ENCODE measurements at regions of chr18 and their contacts with region 1.

Region 1: GRCh38 chr18:28469946-28470345 is 293.0 kb upstream of the CDH2 start:
- DNase-seq: no peak
- H3K4me3 ChIP-seq: no peak overlapping the region
- H3K27ac ChIP-seq: no peak overlapping the region
- H3K4me1 ChIP-seq: no peaks in the 10 kb centered on the region
- H3K27me3 ChIP-seq: no peaks in the 10 kb centered on the region
- CTCF ChIP-seq: no peak
- EP300 ChIP-seq: no peak
- POLR2A ChIP-seq: no peak

Region 2: GRCh38 chr18:28390022-28390421 is 79.9 kb before region 1 on chr18:
- intact Hi-C with region 1: no loop called
- DNase-seq: no peak
- H3K4me3 ChIP-seq: no peak overlapping the region
- H3K27ac ChIP-seq: no peak overlapping the region
- H3K4me1 ChIP-seq: no peaks in the 10 kb centered on the region
- H3K27me3 ChIP-seq: no peaks in the 10 kb centered on the region
- CTCF ChIP-seq: no peak
- EP300 ChIP-seq: no peak
- POLR2A ChIP-seq: no peak

Region 3: GRCh38 chr18:28529644-28530043 is 59.7 kb after region 1 on chr18:
- intact Hi-C with region 1: loop called in 1 of 4 experiments (anchors 10 kb)
- DNase-seq: no peak
- H3K4me3 ChIP-seq: no peak overlapping the region
- H3K27ac ChIP-seq: no peak overlapping the region
- H3K4me1 ChIP-seq: no peaks in the 10 kb centered on the region
- H3K27me3 ChIP-seq: no peaks in the 10 kb centered on the region
- CTCF ChIP-seq: no peak
- EP300 ChIP-seq: no peak
- POLR2A ChIP-seq: no peak

Measured in ovary (tissue), 10 donors.